ENCODE measurements at regions of chr12 and their contacts with region 1.

Region 1: DNA sequence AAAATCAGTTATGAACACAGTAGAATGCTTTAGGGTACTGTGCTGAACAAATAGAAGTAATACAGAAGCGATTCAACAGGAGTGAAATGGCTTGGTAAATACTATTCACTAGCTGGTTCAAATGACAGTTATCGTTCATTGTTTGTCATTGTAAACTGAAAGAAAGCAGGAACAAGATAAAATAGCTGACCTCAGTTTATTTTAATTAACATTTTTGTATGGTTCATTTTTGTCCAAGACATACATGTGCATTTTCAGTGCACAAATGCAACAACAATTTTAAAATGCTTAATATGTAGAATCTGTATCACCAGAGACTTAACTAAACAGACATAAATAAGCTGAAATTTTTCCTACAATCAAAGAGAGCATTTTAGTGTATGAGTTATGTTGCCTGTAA is 49.9 kb downstream of the ALX1 start:
- DNase-seq: no peak
- ATAC-seq: no peak
- H3K4me3 ChIP-seq: no peak overlapping the region
- H3K4me3 Mint-ChIP-seq: no peak overlapping the region
- H3K27ac ChIP-seq: no peak overlapping the region
- H3K27ac Mint-ChIP-seq: no peak overlapping the region
- H3K4me1 ChIP-seq: no peaks in the 10 kb centered on the region
- H3K4me1 Mint-ChIP-seq: no peaks in the 10 kb centered on the region
- H3K27me3 ChIP-seq: no peaks in the 10 kb centered on the region
- H3K27me3 Mint-ChIP-seq: no peaks in the 10 kb centered on the region
- CTCF ChIP-seq: no peak

Region 2: GRCh38 chr12:85358715-85359114 is 28.8 kb after region 1 on chr12:
- CTCF ChIA-PET with region 1: no interaction called
- POLR2A ChIA-PET with region 1: no interaction called
- intact Hi-C with region 1: loop called in 1 of 2 experiments (anchors 1 kb)
- DNase-seq: no peak
- ATAC-seq: no peak
- H3K4me3 ChIP-seq: no peak overlapping the region
- H3K4me3 Mint-ChIP-seq: no peak overlapping the region
- H3K27ac ChIP-seq: no peak overlapping the region
- H3K27ac Mint-ChIP-seq: no peak overlapping the region
- H3K4me1 ChIP-seq: no peaks in the 10 kb centered on the region
- H3K4me1 Mint-ChIP-seq: no peaks in the 10 kb centered on the region
- H3K27me3 ChIP-seq: no peaks in the 10 kb centered on the region
- H3K27me3 Mint-ChIP-seq: no peaks in the 10 kb centered on the region
- CTCF ChIP-seq: no peak